AG04450 (cell line): ENCODE measurements at regions of chr10 and their contacts with region 1.

Region 1: GRCh38 chr10:114103284-114103683 is 59.6 kb downstream of the ADRB1 start:
- DNase-seq: peak; percentile 11
- H3K4me3 ChIP-seq: no peak overlapping the region
- H3K27ac ChIP-seq: no peak overlapping the region
- H3K27me3 ChIP-seq: peaks cover 15% of the 10 kb centered on the region
- CTCF ChIP-seq: peak; percentile 57

Region 2: DNA sequence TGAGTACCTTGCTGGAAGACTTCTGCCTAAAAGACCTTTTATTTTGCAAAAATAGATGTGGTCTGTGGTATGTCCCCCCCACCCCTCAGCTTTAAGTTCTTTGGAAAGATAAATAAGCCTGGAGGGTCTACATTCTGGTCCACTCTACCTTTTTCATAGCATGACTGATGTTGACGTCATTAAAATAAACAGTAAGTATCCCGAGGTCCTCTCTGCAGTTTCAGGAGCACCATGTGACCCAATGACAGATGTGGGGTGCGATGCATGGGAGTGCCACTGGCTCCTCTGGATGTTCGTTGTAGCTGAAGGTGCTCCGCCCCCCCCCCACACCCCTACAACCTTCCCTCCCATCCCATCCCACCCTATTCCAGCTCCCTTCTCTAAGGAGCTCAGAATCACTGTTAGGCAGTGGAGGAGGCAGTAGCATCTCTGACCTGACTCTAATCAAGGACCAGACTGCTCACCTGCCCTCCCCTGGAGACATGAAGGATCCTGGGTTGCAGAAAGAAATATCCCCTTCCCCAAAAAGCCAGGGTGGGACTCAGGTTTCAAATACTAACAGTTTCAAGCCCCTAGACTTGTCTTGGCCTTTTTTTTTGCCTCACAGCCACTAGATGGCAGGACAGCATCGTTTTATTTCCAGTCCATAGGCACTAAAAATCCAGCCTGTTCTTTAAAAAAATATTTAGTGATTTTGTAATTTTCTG is 398.5 kb before region 1 on chr10:
- CTCF ChIA-PET with region 1: interaction called, 52 read pairs
- POLR2A ChIA-PET with region 1: no interaction called
- DNase-seq: no peak
- H3K4me3 ChIP-seq: no peak overlapping the region
- H3K27ac ChIP-seq: no peak overlapping the region
- H3K27me3 ChIP-seq: no peaks in the 10 kb centered on the region
- CTCF ChIP-seq: peak; percentile 77

Region 3: DNA sequence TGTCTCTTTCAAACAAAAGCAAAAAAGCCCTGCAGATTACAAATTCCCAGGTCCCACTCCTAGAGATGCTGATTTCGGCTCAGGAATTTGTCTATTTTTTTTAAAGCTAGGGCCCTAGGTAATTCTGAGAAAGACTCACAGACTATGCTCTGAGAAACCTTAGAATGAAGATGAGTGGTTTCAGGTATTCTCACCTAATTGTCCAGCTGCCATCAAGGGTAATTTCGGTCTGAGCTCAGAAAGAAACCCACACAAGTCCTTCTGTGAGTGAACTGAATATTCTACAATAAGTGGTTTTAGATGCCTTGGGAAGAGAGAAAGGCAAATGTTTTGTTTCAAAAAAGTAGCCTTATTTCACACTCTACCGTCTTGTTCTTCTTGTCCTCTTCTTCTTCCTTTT is 295.1 kb before region 1 on chr10:
- CTCF ChIA-PET with region 1: interaction called, 13 read pairs
- POLR2A ChIA-PET with region 1: no interaction called
- DNase-seq: no peak
- H3K4me3 ChIP-seq: no peak overlapping the region
- H3K27ac ChIP-seq: no peak overlapping the region
- H3K27me3 ChIP-seq: peaks cover 13% of the 10 kb centered on the region
- CTCF ChIP-seq: no peak